Naive thymus-derived CD8-positive, alpha-beta T cell (primary cell): ENCODE measurements at regions of chr10 and their contacts with region 1.

Region 1: DNA sequence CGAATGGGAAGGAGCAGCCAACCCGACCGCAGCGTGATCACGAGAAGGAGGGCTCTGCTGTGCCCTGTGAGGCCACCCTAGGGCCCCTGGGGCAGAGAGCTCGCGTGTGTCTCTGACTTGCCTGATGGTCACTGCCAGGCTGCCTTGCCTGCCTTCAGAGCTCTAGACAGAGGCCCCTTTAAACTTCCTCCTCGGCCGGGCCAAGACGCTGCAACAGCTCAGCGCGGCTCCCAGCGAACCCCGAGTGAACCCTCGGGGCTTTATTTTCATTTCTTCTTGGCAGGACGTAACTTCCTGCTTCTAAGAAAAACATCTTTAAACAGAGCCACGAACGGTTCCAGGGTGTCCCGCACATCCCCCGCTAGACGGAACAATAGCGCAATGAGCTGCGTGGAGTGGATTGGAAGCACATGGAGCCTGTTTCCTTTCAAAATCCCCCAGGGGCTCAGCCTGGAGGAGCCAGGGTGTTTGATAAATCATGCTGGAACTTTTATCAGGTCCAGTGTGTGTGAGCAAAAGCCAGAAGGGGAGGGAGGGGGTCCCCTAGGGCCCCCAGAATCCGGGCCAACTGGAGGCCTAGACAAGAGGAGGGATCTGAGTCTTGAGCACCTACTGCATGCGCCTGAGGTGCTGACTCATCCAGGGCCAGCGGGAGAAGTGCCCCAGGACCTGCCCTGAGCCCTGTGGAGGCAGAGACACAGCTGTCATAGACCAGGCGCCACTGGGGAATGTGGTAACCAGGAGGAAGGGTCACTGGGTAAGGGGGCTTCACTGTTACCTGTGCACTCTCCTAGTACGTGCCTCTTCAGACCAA is 134.1 kb upstream of the GDF10 start:
- DNase-seq: peak; percentile 22 to 78 (median 56)
- ATAC-seq: peak; percentile 87 to 91
- H3K4me3 Mint-ChIP-seq: peak overlapping the region; percentile 85 to 96 (median 90)
- H3K27ac Mint-ChIP-seq: peak overlapping the region; percentile 97 to 99 (median 99)
- H3K4me1 Mint-ChIP-seq: peaks cover 17 to 39% (median 29%) of the 10 kb centered on the region in 4 donors
- H3K27me3 Mint-ChIP-seq: no peaks in the 10 kb centered on the region

Region 2: DNA sequence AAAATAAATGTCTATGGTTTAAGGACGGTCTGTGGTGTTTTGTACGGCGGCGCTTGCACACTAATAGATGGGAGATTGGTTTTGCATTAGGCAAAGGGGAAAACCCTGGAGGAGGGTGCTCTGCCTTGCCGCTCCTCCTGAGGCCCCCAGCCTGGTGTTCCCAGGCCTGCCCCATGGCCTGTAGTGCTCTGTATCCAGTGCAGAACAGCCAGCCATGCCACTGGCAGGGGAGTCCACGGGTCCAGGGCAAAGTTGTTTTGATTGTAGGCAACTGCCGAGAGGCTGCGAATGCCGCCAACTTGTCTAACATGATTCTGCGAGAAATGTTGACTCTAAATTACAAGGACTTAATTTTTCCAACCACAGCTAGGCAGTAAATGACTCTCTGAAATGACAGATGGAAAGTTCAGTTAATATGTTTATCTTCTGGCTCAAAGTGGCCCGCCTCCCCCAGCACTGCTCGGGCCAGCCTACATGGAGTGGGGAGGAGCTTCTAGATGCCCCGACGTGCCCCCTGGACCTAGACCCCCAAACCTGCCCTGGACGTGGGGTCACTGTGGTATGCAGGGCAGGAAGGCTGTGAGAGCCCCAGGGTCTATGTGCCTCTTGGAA is 29.5 kb after region 1 on chr10:
- POLR2A ChIA-PET with region 1: no interaction called
- DNase-seq: no peak
- ATAC-seq: no peak
- H3K4me3 Mint-ChIP-seq: no peak overlapping the region
- H3K27ac Mint-ChIP-seq: peak overlapping the region in 2 of 10 donors; percentile 22 to 46
- H3K4me1 Mint-ChIP-seq: peaks cover 0 to 30% (median 8%) of the 10 kb centered on the region in 4 donors
- H3K27me3 Mint-ChIP-seq: no peaks in the 10 kb centered on the region

Region 3: GRCh38 chr10:47207281-47207615 is 41.3 kb after region 1 on chr10:
- POLR2A ChIA-PET with region 1: interaction called, 24 read pairs
- DNase-seq: peak in 3 of 10 donors; percentile 9 to 33 (median 15)
- ATAC-seq: peak; percentile 65 to 69
- H3K4me3 Mint-ChIP-seq: peak overlapping the region; percentile 58 to 85 (median 78)
- H3K27ac Mint-ChIP-seq: peak overlapping the region; percentile 89 to 98 (median 94)
- H3K4me1 Mint-ChIP-seq: peaks cover 35 to 73% (median 56%) of the 10 kb centered on the region in 4 donors
- H3K27me3 Mint-ChIP-seq: no peaks in the 10 kb centered on the region

Region 4: GRCh38 chr10:47261121-47261520 is 95.2 kb after region 1 on chr10:
- POLR2A ChIA-PET with region 1: interaction called, 13 read pairs
- DNase-seq: peak in 6 of 10 donors; percentile 24 to 59 (median 31)
- ATAC-seq: peak; percentile 59 to 76
- H3K4me3 Mint-ChIP-seq: peak overlapping the region; percentile 13 to 83 (median 64)
- H3K27ac Mint-ChIP-seq: peak overlapping the region; percentile 92 to 99 (median 96)
- H3K4me1 Mint-ChIP-seq: peaks cover 50 to 96% (median 94%) of the 10 kb centered on the region in 4 donors
- H3K27me3 Mint-ChIP-seq: no peaks in the 10 kb centered on the region